ENCODE measurements at regions of chr1 and their contacts with region 1.

Region 1: DNA sequence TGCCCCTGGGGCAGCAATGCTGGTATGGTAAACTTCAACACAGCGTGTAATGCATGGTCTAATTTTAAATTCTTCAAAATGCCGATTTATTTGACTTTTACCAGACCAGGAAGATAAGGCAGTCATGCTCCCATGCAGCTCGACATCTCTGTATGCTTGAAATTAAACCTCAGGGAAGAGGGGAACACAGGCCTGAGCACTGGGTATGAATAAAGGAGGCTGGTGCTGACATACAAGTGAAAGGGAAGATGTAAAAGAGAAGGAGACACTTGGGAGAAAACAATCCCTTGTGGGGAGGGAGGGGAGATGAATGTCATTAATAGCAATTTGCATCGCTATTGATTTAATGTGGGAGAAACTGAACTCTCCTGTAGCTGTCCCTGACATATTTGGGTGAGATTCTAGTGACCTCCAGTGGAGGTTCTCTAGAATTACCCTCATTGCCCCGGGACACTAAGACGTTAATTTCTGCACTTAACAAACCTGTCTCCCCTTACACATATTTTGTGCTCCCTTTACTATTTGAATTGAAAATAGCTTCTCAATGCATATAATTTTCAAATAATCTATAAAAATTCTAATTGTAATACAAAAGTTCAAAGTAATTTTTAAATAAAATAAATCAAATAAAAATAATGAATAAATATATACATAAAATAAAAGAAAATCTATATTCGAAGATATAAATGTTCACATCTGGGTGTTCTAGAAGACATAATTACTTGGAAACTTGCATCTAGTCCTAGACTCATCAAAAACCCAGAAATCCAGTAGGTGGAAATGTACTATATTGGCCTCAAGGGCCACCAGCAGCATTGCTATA is 283.1 kb downstream of the LMX1A start:
- DNase-seq: peak; percentile 51
- ATAC-seq: peak; percentile 86
- H3K4me3 ChIP-seq: no peak overlapping the region
- H3K27ac ChIP-seq: no peak overlapping the region
- H3K4me1 ChIP-seq: no peaks in the 10 kb centered on the region
- H3K27me3 ChIP-seq: no peaks in the 10 kb centered on the region
- CTCF ChIP-seq: peak; percentile 51 to 69 (median 66); a peak in 5 of 6 replicates
- POLR2A ChIP-seq: no peak
- RAD21 ChIP-seq: peak; percentile 77

Region 2: DNA sequence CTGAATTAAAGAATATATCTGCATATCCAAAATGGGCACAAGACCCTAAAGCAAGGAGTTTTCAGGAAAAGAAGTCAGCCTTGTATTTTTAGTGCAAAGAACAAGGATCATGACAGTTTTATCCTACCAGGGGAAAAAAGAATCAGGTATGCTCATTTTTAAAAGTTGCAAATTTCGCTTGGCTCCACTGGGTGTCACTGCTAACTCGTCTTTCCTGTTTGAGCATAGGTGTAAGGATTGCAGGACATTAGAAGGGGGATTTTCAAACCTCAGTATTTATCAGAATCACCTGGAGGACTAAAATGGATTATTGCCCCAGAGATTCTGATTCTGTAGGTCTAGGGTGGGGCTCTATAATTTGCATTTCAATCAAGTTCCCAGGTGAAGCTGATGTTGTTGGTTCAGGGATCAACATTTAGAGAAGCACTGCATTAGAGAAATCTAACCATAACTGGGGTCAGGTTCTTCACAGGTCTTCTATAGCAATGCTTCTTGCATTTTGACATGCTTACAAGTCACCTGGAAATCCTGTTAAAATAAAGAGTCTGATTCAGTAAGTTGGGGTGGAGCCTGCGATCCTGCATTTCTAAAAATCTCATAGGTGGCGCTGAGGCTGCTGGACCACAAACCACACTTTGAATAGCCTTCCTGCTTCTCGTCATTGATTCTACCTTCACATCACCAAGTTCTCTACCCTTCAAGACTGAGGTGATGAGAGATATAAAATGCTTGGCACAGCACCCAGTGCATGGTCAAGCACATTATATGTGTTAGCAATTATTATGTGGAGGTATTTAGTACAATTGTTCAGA is 1712.1 kb before region 1 on chr1:
- CTCF ChIA-PET with region 1: interaction called, 7 read pairs
- POLR2A ChIA-PET with region 1: no interaction called
- RAD21 ChIA-PET with region 1: no interaction called
- intact Hi-C with region 1: loop called (anchors 1 kb)
- DNase-seq: peak; percentile 15
- ATAC-seq: peak; percentile 88
- H3K4me3 ChIP-seq: no peak overlapping the region
- H3K27ac ChIP-seq: no peak overlapping the region
- H3K4me1 ChIP-seq: peaks cover 0 to 6% of the 10 kb centered on the region in 2 experiments; a peak in 1 of 4 replicates
- H3K27me3 ChIP-seq: 0 out of 2 replicates have a peak, but pooled peaks cover 5% of the 10 kb centered on the region
- CTCF ChIP-seq: peak; percentile 44 to 65 (median 50); a peak in 5 of 6 replicates
- POLR2A ChIP-seq: no peak
- RAD21 ChIP-seq: peak; percentile 74

Region 3: DNA sequence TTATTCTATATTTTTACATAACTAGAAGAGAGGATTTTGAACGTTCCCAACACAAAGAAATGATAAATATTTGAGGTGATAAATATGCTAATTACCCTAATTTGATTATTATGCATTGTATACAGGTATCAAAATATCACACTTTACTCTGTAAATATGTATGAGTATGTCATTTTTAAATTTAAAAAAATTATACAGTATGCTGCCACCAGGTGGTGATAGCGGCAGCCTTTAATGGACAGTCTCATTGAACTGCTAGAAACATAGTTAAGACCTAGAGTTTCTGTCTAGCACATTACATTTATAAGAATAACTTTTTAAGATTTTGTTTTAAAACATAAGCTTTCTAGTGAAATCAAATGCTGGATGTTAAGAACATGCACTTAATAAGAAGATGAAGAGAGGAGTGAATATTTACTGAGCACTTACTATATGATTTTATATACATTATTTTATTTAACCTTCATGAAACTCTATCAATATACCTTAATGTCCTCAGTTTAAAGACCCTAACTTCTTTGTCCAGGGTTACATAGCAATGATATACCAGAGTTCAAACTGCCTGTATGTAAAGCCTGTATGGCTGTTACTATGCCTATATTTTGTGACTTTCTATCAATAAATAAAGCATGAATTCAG is 1544.6 kb before region 1 on chr1:
- CTCF ChIA-PET with region 1: no interaction called
- POLR2A ChIA-PET with region 1: no interaction called
- RAD21 ChIA-PET with region 1: no interaction called
- intact Hi-C with region 1: loop called (anchors 2 kb)
- DNase-seq: peak; percentile 13
- ATAC-seq: peak; percentile 68
- H3K4me3 ChIP-seq: no peak overlapping the region
- H3K27ac ChIP-seq: no peak overlapping the region
- H3K4me1 ChIP-seq: no peaks in the 10 kb centered on the region
- H3K27me3 ChIP-seq: no peaks in the 10 kb centered on the region
- CTCF ChIP-seq: peak; percentile 29 to 56 (median 56); a peak in 5 of 6 replicates
- POLR2A ChIP-seq: no peak
- RAD21 ChIP-seq: peak; percentile 47

Region 4: GRCh38 chr1:164163289-164163864 is 910.0 kb before region 1 on chr1:
- CTCF ChIA-PET with region 1: no interaction called
- POLR2A ChIA-PET with region 1: no interaction called
- RAD21 ChIA-PET with region 1: no interaction called
- intact Hi-C with region 1: loop called (anchors 2 kb)
- DNase-seq: no peak
- ATAC-seq: no peak
- H3K4me3 ChIP-seq: no peak overlapping the region
- H3K27ac ChIP-seq: no peak overlapping the region
- H3K4me1 ChIP-seq: no peaks in the 10 kb centered on the region
- H3K27me3 ChIP-seq: no peaks in the 10 kb centered on the region
- CTCF ChIP-seq: no peak
- POLR2A ChIP-seq: no peak
- RAD21 ChIP-seq: no peak

Region 5: DNA sequence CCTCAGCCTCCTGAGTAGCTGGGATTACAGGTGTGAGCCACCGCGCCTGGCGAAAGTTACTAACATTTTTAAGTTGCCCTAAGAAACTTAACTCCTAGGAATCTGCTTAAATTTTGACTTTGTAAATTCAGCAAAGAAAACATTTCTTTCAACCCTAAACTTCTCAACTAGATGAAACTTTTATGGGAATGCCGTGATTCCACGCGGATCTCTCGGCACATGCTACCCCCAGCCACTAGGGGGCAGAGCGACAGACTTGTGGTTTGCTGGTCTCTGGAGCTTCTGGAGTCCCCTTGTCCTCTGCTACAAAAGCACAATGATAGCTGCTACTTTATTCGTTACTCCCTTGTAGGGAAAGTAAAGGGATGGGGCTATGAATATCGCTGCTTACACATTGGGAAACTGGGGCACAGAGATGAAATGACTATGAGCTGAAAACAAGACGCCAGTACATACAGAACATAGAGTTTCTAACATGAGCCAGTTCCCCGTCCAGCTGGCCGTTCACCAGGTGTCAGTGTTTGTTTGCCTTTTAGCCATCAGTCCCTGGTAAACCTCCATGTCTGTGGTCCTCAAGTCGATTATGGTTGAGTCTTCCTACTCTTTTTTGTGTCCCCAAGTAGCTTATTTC is 399.7 kb before region 1 on chr1:
- CTCF ChIA-PET with region 1: no interaction called
- POLR2A ChIA-PET with region 1: no interaction called
- RAD21 ChIA-PET with region 1: no interaction called
- intact Hi-C with region 1: loop called (anchors 2 kb)
- DNase-seq: no peak
- ATAC-seq: peak; percentile 68
- H3K4me3 ChIP-seq: no peak overlapping the region
- H3K27ac ChIP-seq: no peak overlapping the region
- H3K4me1 ChIP-seq: peaks cover 36 to 38% of the 10 kb centered on the region in 2 experiments
- H3K27me3 ChIP-seq: no peaks in the 10 kb centered on the region
- CTCF ChIP-seq: peak; percentile 40 to 97 (median 93); a peak in 5 of 6 replicates
- POLR2A ChIP-seq: no peak
- RAD21 ChIP-seq: peak; percentile 54

Region 6: GRCh38 chr1:164891612-164892011 is 181.8 kb before region 1 on chr1:
- CTCF ChIA-PET with region 1: interaction called, 3 read pairs
- POLR2A ChIA-PET with region 1: no interaction called
- RAD21 ChIA-PET with region 1: no interaction called
- intact Hi-C with region 1: loop called (anchors 5 kb)
- DNase-seq: no peak
- ATAC-seq: peak; percentile 72
- H3K4me3 ChIP-seq: no peak overlapping the region
- H3K27ac ChIP-seq: no peak overlapping the region
- H3K4me1 ChIP-seq: no peaks in the 10 kb centered on the region
- H3K27me3 ChIP-seq: peaks cover 10% of the 10 kb centered on the region; the same call in 1 of the 2 replicates
- CTCF ChIP-seq: peak in 1 of 3 experiments; percentile 19; a peak in 1 of 6 replicates
- POLR2A ChIP-seq: no peak
- RAD21 ChIP-seq: peak; percentile 29; the same call in 1 of the 2 replicates

Measured in HCT116 (cell line).